Pancreas (tissue), 10 donors: ENCODE measurements at regions of chrX and their contacts with region 1.

Region 1: GRCh38 chrX:27903960-27904359 is 77.3 kb downstream of the DCAF8L1 start:
- DNase-seq: no peak
- ATAC-seq: no peak
- H3K4me3 ChIP-seq: no peak overlapping the region
- H3K27ac ChIP-seq: no peak overlapping the region
- H3K4me1 ChIP-seq: no peaks in the 10 kb centered on the region
- H3K27me3 ChIP-seq: peaks cover 0 to 3% (median 0%) of the 10 kb centered on the region in 4 donors
- CTCF ChIP-seq: no peak

Region 2: GRCh38 chrX:27953171-27953570 is 49.2 kb after region 1 on chrX:
- intact Hi-C with region 1: no loop called
- DNase-seq: no peak
- ATAC-seq: no peak
- H3K4me3 ChIP-seq: no peak overlapping the region
- H3K27ac ChIP-seq: no peak overlapping the region
- H3K4me1 ChIP-seq: no peaks in the 10 kb centered on the region
- H3K27me3 ChIP-seq: no peaks in the 10 kb centered on the region
- CTCF ChIP-seq: no peak

Region 3: DNA sequence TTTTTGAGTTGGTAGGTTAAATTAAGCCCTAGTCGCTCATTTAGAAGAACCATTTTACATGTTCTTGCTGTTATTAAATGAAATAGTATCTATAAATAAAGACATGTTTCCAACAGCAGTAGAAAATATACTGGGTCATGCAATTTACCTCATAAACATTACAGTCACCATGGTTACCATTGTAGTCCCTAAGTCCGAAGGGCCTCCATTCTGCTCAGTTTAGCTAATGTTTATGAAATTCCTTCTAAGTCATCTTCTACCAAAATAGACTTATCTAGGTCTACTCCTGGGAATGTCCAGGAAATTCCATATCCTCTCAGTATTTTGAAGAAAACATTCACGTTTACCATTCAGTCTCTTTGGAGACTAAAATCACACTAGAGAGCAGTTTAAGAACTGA is 369.8 kb after region 1 on chrX:
- intact Hi-C with region 1: loop called in 1 of 3 experiments (anchors 10 kb)
- DNase-seq: no peak
- ATAC-seq: no peak
- H3K4me3 ChIP-seq: no peak overlapping the region
- H3K27ac ChIP-seq: no peak overlapping the region
- H3K4me1 ChIP-seq: no peaks in the 10 kb centered on the region
- H3K27me3 ChIP-seq: no peaks in the 10 kb centered on the region
- CTCF ChIP-seq: no peak